H1 (cell line): ENCODE measurements at regions of chr10 and their contacts with region 1.

Region 1: DNA sequence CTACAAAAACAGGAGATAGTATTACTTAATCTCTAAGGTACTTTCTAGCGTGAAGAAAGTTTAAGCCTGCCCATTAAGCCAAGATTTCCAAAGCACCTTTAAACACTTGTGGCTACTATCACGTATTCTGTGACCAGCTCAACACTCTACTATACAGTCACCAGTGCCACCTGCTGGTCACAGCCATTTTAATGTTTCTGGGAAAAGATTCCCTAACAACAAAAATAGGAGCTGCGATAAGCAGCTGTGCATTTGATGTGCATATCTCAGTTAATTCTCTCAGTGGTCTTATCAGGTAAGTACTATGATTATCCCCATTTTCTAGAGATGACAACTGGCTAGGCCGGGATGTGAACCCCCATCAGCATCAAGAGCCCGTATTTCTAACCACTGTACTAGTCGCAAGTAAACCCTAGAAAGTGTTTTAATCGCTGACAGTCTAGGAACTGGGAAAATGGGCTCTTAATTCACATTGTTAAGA is 860 bp downstream of the SEC31B start:
- DNase-seq: peak in 1 of 2 experiments; percentile 79
- H3K4me3 ChIP-seq: peak overlapping the region in 3 of 4 experiments; percentile 45 to 61 (median 56); a peak in 6 of 8 replicates
- H3K27ac ChIP-seq: no peak overlapping the region
- H3K4me1 ChIP-seq: peaks cover 0 to 3% (median under 1%) of the 10 kb centered on the region in 4 experiments; a peak in 2 of 7 replicates
- H3K27me3 ChIP-seq: peaks cover 2 to 24% (median 15%) of the 10 kb centered on the region in 4 experiments; a peak in 6 of 7 replicates
- CTCF ChIP-seq: peak in 2 of 3 experiments; percentile 66 to 69; a peak in 3 of 4 replicates
- EP300 ChIP-seq: no peak
- POLR2A ChIP-seq: no peak
- RAD21 ChIP-seq: peak; percentile 66 to 74

Region 2: DNA sequence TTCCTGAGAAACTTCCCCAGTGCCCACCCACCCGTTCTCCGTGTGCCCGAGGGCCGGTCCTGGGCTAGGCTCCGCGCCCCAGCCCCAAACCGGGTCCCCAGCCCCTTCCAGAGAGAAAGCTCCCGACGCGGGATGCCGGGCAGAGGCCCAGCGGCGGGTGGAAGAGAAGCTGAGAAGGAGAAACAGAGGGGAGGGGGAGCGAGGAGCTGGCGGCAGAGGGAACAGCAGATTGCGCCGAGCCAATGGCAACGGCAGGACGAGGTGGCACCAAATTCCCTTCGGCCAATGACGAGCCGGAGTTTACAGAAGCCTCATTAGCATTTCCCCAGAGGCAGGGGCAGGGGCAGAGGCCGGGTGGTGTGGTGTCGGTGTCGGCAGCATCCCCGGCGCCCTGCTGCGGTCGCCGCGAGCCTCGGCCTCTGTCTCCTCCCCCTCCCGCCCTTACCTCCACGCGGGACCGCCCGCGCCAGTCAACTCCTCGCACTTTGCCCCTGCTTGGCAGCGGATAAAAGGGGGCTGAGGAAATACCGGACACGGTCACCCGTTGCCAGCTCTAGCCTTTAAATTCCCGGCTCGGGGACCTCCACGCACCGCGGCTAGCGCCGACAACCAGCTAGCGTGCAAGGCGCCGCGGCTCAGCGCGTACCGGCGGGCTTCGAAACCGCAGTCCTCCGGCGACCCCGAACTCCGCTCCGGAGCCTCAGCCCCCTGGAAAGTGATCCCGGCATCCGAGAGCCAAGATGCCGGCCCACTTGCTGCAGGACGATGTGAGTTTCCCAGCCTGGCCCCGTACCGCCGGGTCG is 171.8 kb before region 1 on chr10 and contains the start of gene SCD:
- CTCF ChIA-PET with region 1: interaction called, 40 read pairs
- POLR2A ChIA-PET with region 1: no interaction called
- DNase-seq: peak; percentile 86 to 91
- H3K4me3 ChIP-seq: peak within 1 kb of the TSS; percentile 85 to 95 (median 90)
- H3K27ac ChIP-seq: peak within 1 kb of the TSS; percentile 80
- H3K4me1 ChIP-seq: peaks cover 10 to 30% (median 20%) of the 10 kb centered on the region in 4 experiments
- H3K27me3 ChIP-seq: no peaks in the 10 kb centered on the region
- CTCF ChIP-seq: no peak
- EP300 ChIP-seq: peak in 1 of 2 experiments; percentile 32; a peak in 1 of 3 replicates
- POLR2A ChIP-seq: peak; percentile 25 to 82
- RAD21 ChIP-seq: no peak
- total RNA-seq, gene SCD: 604 and 621 TPM in 2 replicates

Region 3: GRCh38 chr10:100438674-100439315 is 80.0 kb before region 1 on chr10:
- CTCF ChIA-PET with region 1: interaction called, 190 read pairs
- POLR2A ChIA-PET with region 1: no interaction called
- DNase-seq: no peak
- H3K4me3 ChIP-seq: no peak overlapping the region
- H3K27ac ChIP-seq: no peak overlapping the region
- H3K4me1 ChIP-seq: no peaks in the 10 kb centered on the region
- H3K27me3 ChIP-seq: no peaks in the 10 kb centered on the region
- CTCF ChIP-seq: no peak
- EP300 ChIP-seq: no peak
- POLR2A ChIP-seq: no peak
- RAD21 ChIP-seq: no peak

Region 4: GRCh38 chr10:100481462-100482081 is 37.2 kb before region 1 on chr10:
- CTCF ChIA-PET with region 1: interaction called, 114 read pairs
- POLR2A ChIA-PET with region 1: interaction called, 9 read pairs
- DNase-seq: peak; percentile 77 to 97
- H3K4me3 ChIP-seq: peak overlapping the region; percentile 35 to 59 (median 53)
- H3K27ac ChIP-seq: no peak overlapping the region
- H3K4me1 ChIP-seq: peaks cover 11 to 26% (median 19%) of the 10 kb centered on the region in 4 experiments
- H3K27me3 ChIP-seq: peaks cover 59 to 77% (median 70%) of the 10 kb centered on the region in 4 experiments
- CTCF ChIP-seq: peak in 2 of 3 experiments; percentile 4 to 7; a peak in 1 of 4 replicates
- EP300 ChIP-seq: no peak
- POLR2A ChIP-seq: no peak
- RAD21 ChIP-seq: 0 out of 4 replicates have a peak, but pooled peaks of 1 of the 2 experiments have one; percentile 4

Region 5: DNA sequence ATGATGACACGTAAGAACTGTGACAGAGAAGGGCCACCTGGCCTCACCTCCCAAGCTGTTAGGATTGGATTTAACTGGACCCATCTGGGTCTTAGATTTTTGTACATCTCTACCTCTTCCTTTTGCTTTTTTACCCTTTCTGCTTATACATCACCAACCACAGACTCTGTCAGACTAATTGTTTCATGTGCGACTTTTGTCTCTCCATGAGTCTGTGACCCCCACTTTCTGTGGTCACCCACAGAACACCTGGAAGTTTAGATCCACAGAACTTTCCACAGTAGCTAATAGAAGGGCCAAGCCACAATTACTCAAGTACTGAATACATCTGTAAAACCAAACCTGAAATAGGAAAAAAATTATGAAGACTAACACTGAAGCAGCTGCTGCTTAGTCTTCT is 22.2 kb before region 1 on chr10:
- CTCF ChIA-PET with region 1: interaction called, 20 read pairs
- POLR2A ChIA-PET with region 1: interaction called, 4 read pairs
- DNase-seq: no peak
- H3K4me3 ChIP-seq: no peak overlapping the region
- H3K27ac ChIP-seq: no peak overlapping the region
- H3K4me1 ChIP-seq: no peaks in the 10 kb centered on the region
- H3K27me3 ChIP-seq: peaks cover 7 to 50% (median 21%) of the 10 kb centered on the region in 4 experiments
- CTCF ChIP-seq: no peak
- EP300 ChIP-seq: no peak
- POLR2A ChIP-seq: no peak
- RAD21 ChIP-seq: no peak

Region 6: DNA sequence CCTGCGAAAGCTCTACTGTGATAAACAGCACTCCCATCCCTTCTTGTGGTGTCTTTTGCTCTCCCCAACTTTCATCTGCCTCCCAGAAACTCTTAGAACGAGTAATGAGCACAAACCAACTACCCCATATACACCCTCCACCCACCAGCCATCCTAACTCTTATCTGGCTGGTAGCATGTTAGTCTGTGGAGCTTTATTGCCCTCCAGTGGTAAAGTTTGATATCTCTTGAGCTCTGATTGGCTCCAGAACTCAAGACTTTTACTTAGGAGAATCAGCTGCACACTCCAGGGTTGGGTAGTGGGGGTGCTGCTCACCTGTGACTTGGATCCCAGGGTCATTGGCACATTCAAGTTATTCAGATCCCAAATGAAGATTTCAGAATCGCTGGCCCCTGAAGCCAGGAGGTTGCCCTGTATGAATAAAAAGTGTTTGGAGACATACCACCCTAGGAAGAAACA is 10.1 kb before region 1 on chr10:
- CTCF ChIA-PET with region 1: interaction called, 84 read pairs
- POLR2A ChIA-PET with region 1: interaction called, 3 read pairs
- DNase-seq: no peak
- H3K4me3 ChIP-seq: no peak overlapping the region
- H3K27ac ChIP-seq: no peak overlapping the region
- H3K4me1 ChIP-seq: no peaks in the 10 kb centered on the region; a peak in 1 of 7 replicates
- H3K27me3 ChIP-seq: peaks cover 0 to 11% (median 4%) of the 10 kb centered on the region in 4 experiments; a peak in 3 of 7 replicates
- CTCF ChIP-seq: peak in 2 of 3 experiments; percentile 81 to 88; a peak in 3 of 4 replicates
- EP300 ChIP-seq: no peak
- POLR2A ChIP-seq: no peak
- RAD21 ChIP-seq: peak; percentile 95 to 98

Region 7: GRCh38 chr10:100535715-100536353 is 17.0 kb after region 1 on chr10 and contains the start of gene HIF1AN:
- CTCF ChIA-PET with region 1: interaction called, 70 read pairs
- POLR2A ChIA-PET with region 1: interaction called, 5 read pairs
- DNase-seq: peak; percentile 84 to 87
- H3K4me3 ChIP-seq: peak within 1 kb of the TSS; percentile 59 to 94 (median 91)
- H3K27ac ChIP-seq: no peak within 1 kb of the TSS
- H3K4me1 ChIP-seq: peaks cover 0 to 9% (median 5%) of the 10 kb centered on the region in 4 experiments; a peak in 5 of 7 replicates
- H3K27me3 ChIP-seq: no peaks in the 10 kb centered on the region
- CTCF ChIP-seq: peak; percentile 90 to 94 (median 91)
- EP300 ChIP-seq: no peak
- POLR2A ChIP-seq: peak; percentile 77 to 90
- RAD21 ChIP-seq: peak in 1 of 2 experiments; percentile 4; a peak in 1 of 4 replicates
- total RNA-seq, gene HIF1AN: 59.7 and 62.8 TPM in 2 replicates

Region 8: GRCh38 chr10:100586959-100587358 is 68.2 kb after region 1 on chr10:
- CTCF ChIA-PET with region 1: no interaction called
- POLR2A ChIA-PET with region 1: no interaction called
- DNase-seq: no peak
- H3K4me3 ChIP-seq: no peak overlapping the region
- H3K27ac ChIP-seq: no peak overlapping the region
- H3K4me1 ChIP-seq: no peaks in the 10 kb centered on the region
- H3K27me3 ChIP-seq: no peaks in the 10 kb centered on the region; a peak in 1 of 7 replicates
- CTCF ChIP-seq: peak in 1 of 3 experiments; percentile 12; a peak in 1 of 4 replicates
- EP300 ChIP-seq: no peak
- POLR2A ChIP-seq: no peak
- RAD21 ChIP-seq: no peak